ENCODE measurements at regions of chr9 and their contacts with region 1.

Region 1: GRCh38 chr9:32431940-32432555 is 47.6 kb downstream of the ACO1 start:
- DNase-seq: peak in 1 of 2 donors; percentile 67
- H3K4me3 ChIP-seq: no peak overlapping the region
- H3K27ac ChIP-seq: peak overlapping the region in 1 of 2 donors; percentile 35
- H3K4me1 ChIP-seq: peaks cover 0 to 7% of the 10 kb centered on the region in 2 donors
- H3K27me3 ChIP-seq: no peaks in the 10 kb centered on the region
- CTCF ChIP-seq: peak in 2 of 3 experiments; percentile 35 to 52

Region 2: DNA sequence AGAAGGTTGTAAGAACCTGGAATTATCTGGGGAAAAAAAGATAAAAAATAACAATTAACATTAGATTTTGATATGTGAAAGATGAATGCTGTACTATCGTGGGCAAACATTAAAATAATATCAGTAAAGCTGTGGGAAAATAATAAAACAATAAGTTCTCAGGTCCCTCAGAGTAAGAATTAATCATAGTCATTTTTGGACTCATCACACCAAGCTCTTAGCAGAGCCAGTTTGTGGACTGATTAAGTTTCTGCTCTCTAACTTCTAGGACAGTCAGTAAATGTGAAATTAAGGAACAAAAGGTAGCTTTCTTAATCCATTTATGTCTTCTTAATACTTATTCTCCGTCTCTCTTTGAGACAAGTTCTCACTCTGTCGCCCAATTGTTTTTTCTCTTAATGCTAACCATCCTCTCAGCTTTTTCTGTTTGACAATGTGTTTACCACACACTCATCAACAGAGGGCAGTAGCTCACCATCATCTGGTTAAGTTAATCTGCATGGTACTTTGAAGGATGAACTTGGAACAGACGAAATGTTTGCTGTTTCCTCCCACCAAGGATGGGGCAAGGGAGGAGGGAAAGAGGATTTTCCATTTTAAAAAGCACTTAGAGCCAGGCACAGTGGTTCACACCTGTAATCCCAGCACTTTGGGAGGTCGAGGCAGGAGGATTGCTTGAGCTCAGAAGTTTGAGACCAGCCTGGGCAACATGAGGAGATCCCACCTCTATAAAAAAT is 52.9 kb before region 1 on chr9:
- intact Hi-C with region 1: loop called (anchors 1 kb)
- DNase-seq: no peak
- H3K4me3 ChIP-seq: no peak overlapping the region
- H3K27ac ChIP-seq: no peak overlapping the region
- H3K4me1 ChIP-seq: no peaks in the 10 kb centered on the region
- H3K27me3 ChIP-seq: no peaks in the 10 kb centered on the region
- CTCF ChIP-seq: peak; percentile 74 to 84 (median 77)

Region 3: GRCh38 chr9:32526041-32526706 is 94.1 kb after region 1 on chr9 and contains the start of gene RIGI:
- intact Hi-C with region 1: loop called (anchors 10 kb)
- DNase-seq: peak; percentile 72 to 97
- H3K4me3 ChIP-seq: peak within 1 kb of the TSS; percentile 71 to 78
- H3K27ac ChIP-seq: peak within 1 kb of the TSS; percentile 78 to 79
- H3K4me1 ChIP-seq: peaks cover 7 to 17% of the 10 kb centered on the region in 2 donors
- H3K27me3 ChIP-seq: no peaks in the 10 kb centered on the region
- CTCF ChIP-seq: peak; percentile 16 to 35 (median 29)
- total RNA-seq, gene RIGI: 1.9 TPM

Region 4: GRCh38 chr9:32579706-32580331 is 147.8 kb after region 1 on chr9:
- intact Hi-C with region 1: loop called (anchors 5 kb)
- DNase-seq: peak in 1 of 2 donors; percentile 84
- H3K4me3 ChIP-seq: peak overlapping the region in 1 of 2 donors; percentile 54
- H3K27ac ChIP-seq: no peak overlapping the region
- H3K4me1 ChIP-seq: no peaks in the 10 kb centered on the region
- H3K27me3 ChIP-seq: no peaks in the 10 kb centered on the region
- CTCF ChIP-seq: peak; percentile 60 to 90 (median 87)

Region 5: GRCh38 chr9:32776201-32776600 is 344.2 kb after region 1 on chr9:
- intact Hi-C with region 1: no loop called
- DNase-seq: no peak
- H3K4me3 ChIP-seq: no peak overlapping the region
- H3K27ac ChIP-seq: no peak overlapping the region
- H3K4me1 ChIP-seq: no peaks in the 10 kb centered on the region
- H3K27me3 ChIP-seq: no peaks in the 10 kb centered on the region
- CTCF ChIP-seq: no peak

Measured in ascending aorta (tissue), 2 donors.